ENCODE measurements at regions of chr17 and their contacts with region 1.

Region 1: DNA sequence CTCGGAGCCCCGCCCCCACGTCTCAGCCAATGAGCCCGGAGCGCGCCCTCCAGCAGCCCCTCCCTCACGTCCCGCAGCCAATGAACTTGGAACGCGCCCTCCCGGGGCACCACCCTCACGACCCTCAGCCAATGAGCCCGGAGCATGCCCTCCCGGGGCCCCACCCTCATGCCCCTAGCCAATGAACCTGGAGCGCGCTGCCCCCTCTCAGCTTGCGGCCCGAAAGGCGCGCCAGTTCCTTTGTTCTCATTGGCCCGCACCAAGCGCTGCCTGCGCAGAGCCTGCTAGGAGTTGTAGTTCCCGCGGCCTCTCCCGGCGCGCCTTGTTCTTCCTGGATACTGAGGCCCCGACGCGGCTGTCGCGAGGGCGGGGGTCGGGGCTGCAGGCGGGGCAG is at the start of gene LRRC45:
- DNase-seq: peak; percentile 96
- ATAC-seq: peak; percentile 93
- H3K4me3 ChIP-seq: peak within 1 kb of the TSS; percentile 95
- H3K27ac ChIP-seq: peak within 1 kb of the TSS; percentile 69
- H3K4me1 ChIP-seq: peaks cover 14% of the 10 kb centered on the region
- H3K27me3 ChIP-seq: no peaks in the 10 kb centered on the region
- CTCF ChIP-seq: no peak
- EP300 ChIP-seq: no peak
- POLR2A ChIP-seq: no peak
- RAD21 ChIP-seq: no peak
- polyA plus RNA-seq, gene LRRC45: 0.03 to 0.05 TPM

Region 2: DNA sequence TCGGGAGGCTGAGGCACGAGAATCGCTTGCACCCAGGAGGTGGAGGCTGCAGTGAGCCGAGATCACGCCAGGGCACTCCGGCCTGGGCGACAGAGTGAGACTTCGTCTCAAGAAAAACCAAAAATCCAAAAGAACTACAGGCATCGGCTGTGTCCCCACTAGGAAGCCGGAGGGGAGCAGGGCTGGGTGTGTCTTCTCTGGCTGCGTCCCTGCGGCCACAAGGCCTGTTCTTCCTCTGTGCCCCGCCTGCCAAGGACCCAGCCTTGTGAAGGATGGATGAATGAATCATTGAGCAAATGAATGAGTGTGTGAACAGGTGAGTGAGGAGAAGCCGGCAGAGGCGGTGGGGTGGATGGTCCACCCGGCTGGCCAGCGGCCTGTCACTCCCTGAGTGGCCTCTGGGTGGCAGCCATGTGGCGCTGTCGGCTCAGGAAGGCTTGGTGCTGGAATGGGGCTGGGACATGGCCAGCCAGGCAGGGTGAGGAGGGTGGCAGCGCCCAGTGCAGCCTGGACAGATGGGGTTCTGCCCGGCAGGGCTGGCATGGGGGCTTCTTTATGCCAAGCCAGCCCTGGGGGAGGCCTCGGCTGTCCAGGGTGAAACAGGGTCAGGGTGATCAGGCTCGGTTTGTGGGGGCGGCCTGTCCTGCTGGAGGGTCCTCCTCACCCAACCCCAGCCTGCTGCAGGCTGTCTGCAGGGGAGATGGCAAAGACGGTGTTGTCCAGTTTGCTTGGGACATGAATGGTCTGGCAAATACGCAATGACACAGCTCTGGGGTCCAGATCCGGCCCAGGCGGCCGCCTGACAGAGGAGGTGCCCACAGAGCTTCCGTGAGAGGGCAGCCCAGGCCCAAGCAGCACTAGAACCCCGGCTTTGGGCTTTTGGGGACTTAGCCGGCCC is 289.2 kb before region 1 on chr17:
- CTCF ChIA-PET with region 1: interaction called, 12 read pairs
- POLR2A ChIA-PET with region 1: no interaction called
- RAD21 ChIA-PET with region 1: no interaction called
- SMC1A ChIA-PET with region 1: interaction called, 4 read pairs
- in situ Hi-C with region 1: no loop called
- intact Hi-C with region 1: no loop called
- DNase-seq: no peak
- ATAC-seq: peak; percentile 94
- H3K4me3 ChIP-seq: no peak overlapping the region
- H3K27ac ChIP-seq: no peak overlapping the region
- H3K4me1 ChIP-seq: peaks cover 4% of the 10 kb centered on the region; the same call in 1 of the 2 replicates
- H3K27me3 ChIP-seq: peaks cover 0 to 2% of the 10 kb centered on the region in 2 experiments; a peak in 1 of 4 replicates
- CTCF ChIP-seq: peak; percentile 87 to 97 (median 88)
- EP300 ChIP-seq: no peak
- POLR2A ChIP-seq: no peak
- RAD21 ChIP-seq: peak; percentile 81

Region 3: GRCh38 chr17:81952792-81953228 is 70.2 kb before region 1 on chr17:
- CTCF ChIA-PET with region 1: interaction called, 11 read pairs
- POLR2A ChIA-PET with region 1: interaction called, 4 read pairs
- RAD21 ChIA-PET with region 1: interaction called, 8 read pairs
- SMC1A ChIA-PET with region 1: interaction called, 3 read pairs
- in situ Hi-C with region 1: no loop called
- intact Hi-C with region 1: no loop called
- DNase-seq: no peak
- ATAC-seq: no peak
- H3K4me3 ChIP-seq: no peak overlapping the region
- H3K27ac ChIP-seq: no peak overlapping the region
- H3K4me1 ChIP-seq: no peaks in the 10 kb centered on the region
- H3K27me3 ChIP-seq: no peaks in the 10 kb centered on the region
- CTCF ChIP-seq: no peak
- EP300 ChIP-seq: no peak
- POLR2A ChIP-seq: no peak
- RAD21 ChIP-seq: no peak

Region 4: DNA sequence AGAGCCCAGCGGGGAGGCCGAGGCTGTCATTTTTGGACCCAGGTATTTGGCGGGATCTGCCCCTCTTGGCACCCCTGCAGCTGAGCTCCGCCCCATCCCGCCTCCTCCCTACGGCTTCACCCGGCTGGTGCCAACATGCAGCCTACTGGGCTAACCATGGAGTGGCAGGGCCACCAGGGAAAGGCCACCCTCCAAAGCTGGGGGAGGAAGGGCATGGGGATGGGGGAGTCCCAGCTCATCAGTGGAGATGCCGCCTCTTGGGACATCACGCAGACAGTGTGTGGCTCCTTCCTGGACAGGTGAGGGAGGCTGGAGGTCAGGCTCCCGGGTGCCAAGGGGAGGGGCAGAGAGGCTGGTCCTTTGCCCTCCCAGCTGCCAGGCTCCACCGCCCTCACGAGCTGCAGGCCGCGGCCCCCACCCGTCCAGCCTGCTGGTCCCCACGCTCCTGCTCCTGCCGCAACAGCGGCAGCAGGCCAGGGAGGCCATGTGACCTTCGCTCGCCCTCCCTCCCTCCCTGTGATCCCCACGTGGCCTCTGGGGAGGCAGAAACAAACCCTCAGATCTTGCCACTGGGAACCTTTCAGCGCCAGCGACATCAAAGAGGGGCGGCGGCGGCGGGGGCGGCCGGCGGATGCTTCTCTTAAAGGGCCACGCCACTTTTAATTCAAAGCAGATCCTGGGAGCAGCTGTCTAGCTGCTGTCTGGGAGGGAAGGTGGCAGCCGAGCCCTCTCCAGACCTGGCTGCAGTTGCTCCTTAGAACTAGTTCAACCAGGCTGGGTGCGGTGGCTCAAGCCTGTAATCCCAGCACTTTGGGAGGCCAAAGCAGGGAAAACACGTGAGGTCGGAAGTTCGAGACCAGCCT is 55.2 kb before region 1 on chr17:
- CTCF ChIA-PET with region 1: interaction called, 28 read pairs
- POLR2A ChIA-PET with region 1: no interaction called
- RAD21 ChIA-PET with region 1: interaction called, 12 read pairs
- SMC1A ChIA-PET with region 1: interaction called, 9 read pairs
- in situ Hi-C with region 1: no loop called
- intact Hi-C with region 1: no loop called
- DNase-seq: peak; percentile 40
- ATAC-seq: peak; percentile 98
- H3K4me3 ChIP-seq: no peak overlapping the region
- H3K27ac ChIP-seq: no peak overlapping the region
- H3K4me1 ChIP-seq: peaks cover 18% of the 10 kb centered on the region
- H3K27me3 ChIP-seq: peaks cover 1 to 5% of the 10 kb centered on the region in 2 experiments; a peak in 3 of 4 replicates
- CTCF ChIP-seq: no peak
- EP300 ChIP-seq: no peak
- POLR2A ChIP-seq: peak; percentile 76
- RAD21 ChIP-seq: no peak

Region 5: GRCh38 chr17:82077617-82078358 is 54.8 kb after region 1 on chr17:
- CTCF ChIA-PET with region 1: no interaction called
- POLR2A ChIA-PET with region 1: no interaction called
- RAD21 ChIA-PET with region 1: no interaction called
- SMC1A ChIA-PET with region 1: no interaction called
- in situ Hi-C with region 1: no loop called
- intact Hi-C with region 1: no loop called
- DNase-seq: no peak
- ATAC-seq: peak; percentile 4
- H3K4me3 ChIP-seq: no peak overlapping the region
- H3K27ac ChIP-seq: no peak overlapping the region
- H3K4me1 ChIP-seq: no peaks in the 10 kb centered on the region
- H3K27me3 ChIP-seq: no peaks in the 10 kb centered on the region
- CTCF ChIP-seq: no peak
- EP300 ChIP-seq: no peak
- POLR2A ChIP-seq: peak; percentile 51; the same call in 1 of the 2 replicates
- RAD21 ChIP-seq: no peak

Region 6: DNA sequence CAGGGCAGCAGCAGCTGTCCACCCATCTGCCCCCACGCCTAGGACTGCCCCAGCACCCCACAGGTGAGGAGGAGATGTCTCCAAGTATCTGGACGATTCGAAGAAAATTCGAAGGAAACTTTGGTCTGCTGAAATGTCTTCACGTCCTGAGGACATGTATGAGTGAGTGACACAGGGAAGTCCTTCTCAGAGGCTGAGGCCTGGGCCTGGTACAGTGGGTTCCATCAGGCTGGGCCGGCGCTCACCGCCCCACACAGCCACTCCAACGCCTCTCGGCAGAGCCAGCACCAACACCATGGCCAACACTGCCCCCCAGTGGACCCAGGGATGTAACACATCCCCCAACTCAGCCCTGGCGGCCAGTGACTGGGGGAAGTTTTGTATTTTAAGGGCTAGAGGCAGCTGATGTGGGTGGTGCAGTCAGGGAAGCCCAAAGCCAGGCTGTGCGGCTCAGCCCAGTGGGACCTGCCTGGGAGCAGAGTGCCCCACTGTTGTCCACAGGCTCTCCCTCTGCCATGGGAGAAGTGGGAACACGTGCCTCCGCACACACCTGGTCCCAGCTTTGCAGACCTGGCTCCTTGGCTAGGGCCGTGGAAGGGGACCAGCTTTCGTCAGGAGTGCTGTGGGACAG is 130.9 kb after region 1 on chr17:
- CTCF ChIA-PET with region 1: interaction called, 7 read pairs
- POLR2A ChIA-PET with region 1: interaction called, 3 read pairs
- RAD21 ChIA-PET with region 1: interaction called, 8 read pairs
- SMC1A ChIA-PET with region 1: no interaction called
- in situ Hi-C with region 1: no loop called
- intact Hi-C with region 1: loop called (anchors 1 kb)
- DNase-seq: no peak
- ATAC-seq: peak; percentile 99
- H3K4me3 ChIP-seq: no peak overlapping the region
- H3K27ac ChIP-seq: no peak overlapping the region
- H3K4me1 ChIP-seq: no peaks in the 10 kb centered on the region
- H3K27me3 ChIP-seq: no peaks in the 10 kb centered on the region
- CTCF ChIP-seq: peak; percentile 86 to 93 (median 91)
- EP300 ChIP-seq: no peak
- POLR2A ChIP-seq: no peak
- RAD21 ChIP-seq: peak; percentile 95